ENCODE measurements at regions of chr11 and their contacts with region 1.

Region 1: GRCh38 chr11:57456960-57457642 is 3.2 kb upstream of the RTN4RL2 start:
- DNase-seq: peak; percentile 86
- ATAC-seq: peak; percentile 57
- H3K4me3 Mint-ChIP-seq: peak overlapping the region; percentile 48
- H3K27ac Mint-ChIP-seq: no peak overlapping the region
- H3K4me1 Mint-ChIP-seq: peaks cover 21% of the 10 kb centered on the region
- H3K27me3 Mint-ChIP-seq: peaks cover 34% of the 10 kb centered on the region
- CTCF ChIP-seq: peak; percentile 99

Region 2: GRCh38 chr11:57345555-57346211 is 111.4 kb before region 1 on chr11:
- CTCF ChIA-PET with region 1: interaction called, 28 read pairs
- POLR2A ChIA-PET with region 1: interaction called, 4 read pairs
- intact Hi-C with region 1: no loop called
- DNase-seq: peak; percentile 85
- ATAC-seq: peak; percentile 87
- H3K4me3 Mint-ChIP-seq: no peak overlapping the region
- H3K27ac Mint-ChIP-seq: no peak overlapping the region
- H3K4me1 Mint-ChIP-seq: peaks cover 6% of the 10 kb centered on the region
- H3K27me3 Mint-ChIP-seq: peaks cover 3% of the 10 kb centered on the region
- CTCF ChIP-seq: peak; percentile 93

Region 3: GRCh38 chr11:57406337-57406904 is 50.7 kb before region 1 on chr11:
- CTCF ChIA-PET with region 1: interaction called, 14 read pairs
- POLR2A ChIA-PET with region 1: no interaction called
- intact Hi-C with region 1: no loop called
- DNase-seq: peak; percentile 76
- ATAC-seq: peak; percentile 84
- H3K4me3 Mint-ChIP-seq: no peak overlapping the region
- H3K27ac Mint-ChIP-seq: peak overlapping the region; percentile 88
- H3K4me1 Mint-ChIP-seq: peaks cover 63% of the 10 kb centered on the region
- H3K27me3 Mint-ChIP-seq: no peaks in the 10 kb centered on the region
- CTCF ChIP-seq: no peak

Region 4: GRCh38 chr11:57438345-57439285 is 18.5 kb before region 1 on chr11:
- CTCF ChIA-PET with region 1: interaction called, 65 read pairs
- POLR2A ChIA-PET with region 1: no interaction called
- intact Hi-C with region 1: no loop called
- DNase-seq: no peak
- ATAC-seq: no peak
- H3K4me3 Mint-ChIP-seq: no peak overlapping the region
- H3K27ac Mint-ChIP-seq: no peak overlapping the region
- H3K4me1 Mint-ChIP-seq: no peaks in the 10 kb centered on the region
- H3K27me3 Mint-ChIP-seq: no peaks in the 10 kb centered on the region
- CTCF ChIP-seq: no peak

Region 5: GRCh38 chr11:57480409-57481137 is 23.5 kb after region 1 on chr11:
- CTCF ChIA-PET with region 1: interaction called, 254 read pairs
- POLR2A ChIA-PET with region 1: interaction called, 10 read pairs
- intact Hi-C with region 1: loop called (anchors 2 kb)
- DNase-seq: peak; percentile 88
- ATAC-seq: peak; percentile 63
- H3K4me3 Mint-ChIP-seq: no peak overlapping the region
- H3K27ac Mint-ChIP-seq: no peak overlapping the region
- H3K4me1 Mint-ChIP-seq: peaks cover 19% of the 10 kb centered on the region
- H3K27me3 Mint-ChIP-seq: peaks cover 12% of the 10 kb centered on the region
- CTCF ChIP-seq: peak; percentile 90

Region 6: GRCh38 chr11:57515332-57516060 is 58.4 kb after region 1 on chr11 and contains the start of gene SLC43A1:
- CTCF ChIA-PET with region 1: interaction called, 192 read pairs
- POLR2A ChIA-PET with region 1: interaction called, 3 read pairs
- intact Hi-C with region 1: no loop called
- DNase-seq: peak; percentile 48
- ATAC-seq: peak; percentile 29
- H3K4me3 Mint-ChIP-seq: peak within 1 kb of the TSS; percentile 94
- H3K27ac Mint-ChIP-seq: peak within 1 kb of the TSS; percentile 95
- H3K4me1 Mint-ChIP-seq: peaks cover 29% of the 10 kb centered on the region
- H3K27me3 Mint-ChIP-seq: no peaks in the 10 kb centered on the region
- CTCF ChIP-seq: no peak
- total RNA-seq, gene SLC43A1: 32.1 to 34.0 TPM